ENCODE measurements at regions of chr4 and their contacts with region 1.

Region 1: DNA sequence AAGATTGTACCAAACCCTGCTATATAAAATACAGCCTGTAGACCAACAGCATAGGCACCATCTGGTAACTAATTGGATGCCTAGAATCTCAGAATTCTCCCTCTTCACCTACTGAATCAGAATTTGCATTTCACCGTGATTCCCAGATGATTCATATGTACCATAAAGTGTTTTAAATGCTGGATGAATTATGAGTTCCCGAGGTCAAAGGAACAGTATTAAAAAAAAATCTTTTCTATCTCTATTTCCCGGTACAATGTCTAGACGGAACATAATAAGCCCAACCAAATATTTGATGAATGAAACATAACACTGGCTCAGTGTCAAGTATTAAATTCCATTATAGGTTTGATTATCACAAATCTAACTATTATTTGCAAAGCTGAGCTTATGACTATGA is 280.0 kb downstream of the ANKRD50 start:
- DNase-seq: no peak
- H3K4me3 Mint-ChIP-seq: peak overlapping the region; percentile 26
- H3K27ac Mint-ChIP-seq: peak overlapping the region; percentile 97
- H3K4me1 Mint-ChIP-seq: peaks cover 43% of the 10 kb centered on the region
- H3K27me3 Mint-ChIP-seq: no peaks in the 10 kb centered on the region
- CTCF ChIP-seq: no peak

Region 2: GRCh38 chr4:124641715-124642381 is 209.3 kb after region 1 on chr4:
- CTCF ChIA-PET with region 1: no interaction called
- intact Hi-C with region 1: loop called (anchors 5 kb)
- DNase-seq: peak; percentile 47
- H3K4me3 Mint-ChIP-seq: no peak overlapping the region
- H3K27ac Mint-ChIP-seq: peak overlapping the region; percentile 73
- H3K4me1 Mint-ChIP-seq: peaks cover 22% of the 10 kb centered on the region
- H3K27me3 Mint-ChIP-seq: no peaks in the 10 kb centered on the region
- CTCF ChIP-seq: no peak

Region 3: DNA sequence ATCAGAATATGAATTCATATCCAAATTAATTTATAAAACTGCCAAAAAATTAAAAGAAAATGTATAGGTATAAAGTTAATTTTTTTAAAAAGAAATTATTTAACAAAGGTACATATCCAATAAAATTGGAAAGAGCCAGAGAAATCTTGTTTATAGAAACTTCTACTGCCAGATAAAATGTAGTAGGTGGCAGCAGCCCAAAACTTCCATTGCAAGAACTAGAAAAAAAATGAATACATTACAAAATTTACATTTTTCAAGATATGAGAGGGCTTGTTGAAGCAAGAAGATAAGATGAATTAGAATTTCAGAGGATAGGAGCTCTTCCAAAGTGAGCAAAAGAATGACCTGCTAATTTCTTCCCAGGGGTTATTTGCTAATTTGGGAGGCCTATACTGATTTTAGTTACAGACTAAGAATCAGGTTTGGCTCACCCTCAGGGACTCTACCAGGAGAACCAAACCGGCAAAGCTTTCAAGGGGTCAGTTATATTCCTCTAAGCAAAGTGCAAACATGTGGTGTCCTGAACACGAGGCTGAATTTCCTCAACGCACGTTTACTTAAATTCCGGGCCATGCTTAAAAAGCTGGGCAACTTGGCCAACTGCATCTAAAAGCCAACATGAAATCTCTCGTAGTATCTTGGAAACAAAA is 262.6 kb after region 1 on chr4:
- CTCF ChIA-PET with region 1: no interaction called
- intact Hi-C with region 1: loop called (anchors 5 kb)
- DNase-seq: no peak
- H3K4me3 Mint-ChIP-seq: no peak overlapping the region
- H3K27ac Mint-ChIP-seq: no peak overlapping the region
- H3K4me1 Mint-ChIP-seq: peaks cover 13% of the 10 kb centered on the region
- H3K27me3 Mint-ChIP-seq: no peaks in the 10 kb centered on the region
- CTCF ChIP-seq: no peak

Region 4: DNA sequence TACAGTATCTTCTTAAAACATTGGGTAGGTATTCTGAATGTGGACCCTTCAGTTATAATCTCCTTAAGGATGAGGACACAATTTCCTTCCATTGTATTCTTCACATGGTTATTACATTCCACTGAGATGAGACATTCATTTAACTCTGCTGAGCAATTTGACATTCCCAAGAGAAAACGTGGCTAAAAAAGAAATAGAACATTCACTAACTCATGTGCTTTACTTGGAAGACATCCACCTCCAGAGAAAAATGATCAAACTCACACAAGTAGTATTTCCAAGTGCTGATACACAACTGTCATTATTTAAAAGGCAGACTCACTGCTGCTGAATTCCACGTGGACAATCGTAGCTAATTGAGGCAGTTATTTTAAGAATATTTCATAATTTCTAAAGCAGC is 507.9 kb after region 1 on chr4:
- CTCF ChIA-PET with region 1: no interaction called
- intact Hi-C with region 1: loop called (anchors 10 kb)
- DNase-seq: no peak
- H3K4me3 Mint-ChIP-seq: no peak overlapping the region
- H3K27ac Mint-ChIP-seq: peak overlapping the region; percentile 36
- H3K4me1 Mint-ChIP-seq: peaks cover 51% of the 10 kb centered on the region
- H3K27me3 Mint-ChIP-seq: no peaks in the 10 kb centered on the region
- CTCF ChIP-seq: no peak